Activated CD8-positive, alpha-beta T cell treated with anti-CD3 and anti-CD28 coated beads, Interleukin-2, amount 10 ng/mL, durations not matched to agents 7 days and 5 days (primary cell): ENCODE measurements at regions of chr9 and their contacts with region 1.

Region 1: DNA sequence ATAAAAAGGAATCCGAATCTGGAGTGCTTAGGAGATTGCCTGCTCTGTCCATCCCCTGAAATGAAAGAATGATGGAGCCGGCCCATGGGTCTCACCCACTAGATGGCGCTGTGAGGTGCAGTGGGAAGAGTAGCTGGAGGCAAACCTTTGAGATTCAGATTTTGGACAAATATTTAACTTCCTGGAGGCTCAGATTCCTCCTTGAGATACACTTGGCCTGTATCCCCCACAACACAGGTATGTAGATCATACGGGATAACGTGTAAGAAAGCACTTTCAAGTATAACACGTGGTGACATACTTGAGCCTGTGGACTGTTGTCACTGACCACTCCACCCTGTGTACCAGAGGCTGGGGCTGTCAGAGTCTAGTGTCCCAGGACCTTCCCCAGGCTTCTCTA is 32.3 kb downstream of the TRMO start:
- DNase-seq: peak; percentile 76
- ATAC-seq: peak; percentile 76
- H3K4me3 Mint-ChIP-seq: no peak overlapping the region
- H3K27ac Mint-ChIP-seq: no peak overlapping the region
- H3K4me1 Mint-ChIP-seq: peaks cover 6% of the 10 kb centered on the region
- H3K27me3 Mint-ChIP-seq: no peaks in the 10 kb centered on the region

Region 2: DNA sequence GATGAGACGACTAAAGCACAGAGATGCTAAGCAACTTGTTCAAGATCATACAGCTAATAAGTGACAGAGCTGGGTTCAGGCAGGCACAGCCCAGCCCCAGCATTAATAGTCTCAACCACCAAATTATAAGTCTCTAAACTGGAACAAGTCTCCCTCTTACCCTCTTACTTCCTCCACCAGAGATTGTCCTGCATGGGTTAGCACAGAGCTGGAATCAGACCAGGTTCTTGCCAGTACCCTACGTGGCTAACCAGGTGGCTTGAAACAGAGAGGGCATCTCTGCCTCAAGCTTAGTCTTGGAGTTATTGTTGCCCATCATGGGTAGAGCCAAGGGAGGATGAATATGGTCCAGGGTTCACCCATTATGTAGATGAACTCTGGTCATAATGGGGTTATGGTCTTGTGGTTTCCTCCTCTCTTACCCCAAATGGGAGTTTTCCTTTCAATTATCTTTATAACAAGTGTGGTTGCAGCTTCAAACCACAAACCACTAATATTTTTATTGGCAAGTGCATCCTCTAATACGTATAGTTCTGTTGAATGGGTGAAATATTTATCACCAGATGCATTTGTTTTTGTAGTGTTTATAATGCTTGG is 184.6 kb before region 1 on chr9:
- CTCF ChIA-PET with region 1: interaction called, 12 read pairs
- POLR2A ChIA-PET with region 1: no interaction called
- DNase-seq: no peak
- ATAC-seq: no peak
- H3K4me3 Mint-ChIP-seq: no peak overlapping the region
- H3K27ac Mint-ChIP-seq: no peak overlapping the region
- H3K4me1 Mint-ChIP-seq: peaks cover 26% of the 10 kb centered on the region
- H3K27me3 Mint-ChIP-seq: peaks cover 40% of the 10 kb centered on the region

Region 3: GRCh38 chr9:97860451-97861147 is 29.4 kb before region 1 on chr9:
- CTCF ChIA-PET with region 1: interaction called, 15 read pairs
- POLR2A ChIA-PET with region 1: interaction called, 3 read pairs
- DNase-seq: no peak
- ATAC-seq: no peak
- H3K4me3 Mint-ChIP-seq: no peak overlapping the region
- H3K27ac Mint-ChIP-seq: no peak overlapping the region
- H3K4me1 Mint-ChIP-seq: peaks cover 12% of the 10 kb centered on the region
- H3K27me3 Mint-ChIP-seq: peaks cover 67% of the 10 kb centered on the region

Region 4: GRCh38 chr9:97900738-97901565 is 10.9 kb after region 1 on chr9:
- CTCF ChIA-PET with region 1: interaction called, 213 read pairs
- POLR2A ChIA-PET with region 1: interaction called, 7 read pairs
- DNase-seq: peak; percentile 46
- ATAC-seq: no peak
- H3K4me3 Mint-ChIP-seq: no peak overlapping the region
- H3K27ac Mint-ChIP-seq: no peak overlapping the region
- H3K4me1 Mint-ChIP-seq: peaks cover 43% of the 10 kb centered on the region
- H3K27me3 Mint-ChIP-seq: no peaks in the 10 kb centered on the region

Region 5: DNA sequence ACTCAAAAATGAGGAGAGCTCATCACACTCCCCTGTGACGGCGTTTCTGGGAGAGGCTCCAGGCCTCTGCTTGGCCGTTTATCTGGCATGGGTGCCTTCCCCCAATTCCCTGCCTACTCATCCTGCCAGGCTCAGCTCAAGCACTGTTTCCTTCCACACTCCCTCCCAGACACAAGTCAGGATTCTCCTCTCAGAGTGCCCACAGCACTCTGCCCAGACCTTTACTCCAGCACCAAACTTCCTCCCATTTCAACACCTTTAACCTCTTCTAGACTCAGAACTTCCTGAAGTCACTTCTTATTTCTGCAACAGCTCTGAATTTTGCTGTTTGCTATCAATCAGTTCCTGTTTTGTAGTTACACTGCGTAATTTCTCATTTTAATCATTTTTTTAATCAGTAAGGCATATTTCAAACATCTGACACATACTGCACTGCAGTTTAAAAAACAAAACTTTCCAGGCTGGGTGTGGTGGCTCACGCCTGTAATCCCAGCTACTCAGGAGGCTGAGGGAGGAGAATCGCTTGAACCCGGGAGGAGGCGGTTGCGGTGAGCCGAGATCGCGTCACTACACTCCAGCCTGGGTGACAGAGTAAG is 16.3 kb after region 1 on chr9:
- CTCF ChIA-PET with region 1: interaction called, 213 read pairs
- POLR2A ChIA-PET with region 1: no interaction called
- DNase-seq: no peak
- ATAC-seq: peak; percentile 3
- H3K4me3 Mint-ChIP-seq: peak overlapping the region; percentile 72
- H3K27ac Mint-ChIP-seq: peak overlapping the region; percentile 98
- H3K4me1 Mint-ChIP-seq: peaks cover 70% of the 10 kb centered on the region
- H3K27me3 Mint-ChIP-seq: no peaks in the 10 kb centered on the region